CD8-positive, alpha-beta T cell (primary cell): ENCODE measurements at regions of chr16 and their contacts with region 1.

Region 1: DNA sequence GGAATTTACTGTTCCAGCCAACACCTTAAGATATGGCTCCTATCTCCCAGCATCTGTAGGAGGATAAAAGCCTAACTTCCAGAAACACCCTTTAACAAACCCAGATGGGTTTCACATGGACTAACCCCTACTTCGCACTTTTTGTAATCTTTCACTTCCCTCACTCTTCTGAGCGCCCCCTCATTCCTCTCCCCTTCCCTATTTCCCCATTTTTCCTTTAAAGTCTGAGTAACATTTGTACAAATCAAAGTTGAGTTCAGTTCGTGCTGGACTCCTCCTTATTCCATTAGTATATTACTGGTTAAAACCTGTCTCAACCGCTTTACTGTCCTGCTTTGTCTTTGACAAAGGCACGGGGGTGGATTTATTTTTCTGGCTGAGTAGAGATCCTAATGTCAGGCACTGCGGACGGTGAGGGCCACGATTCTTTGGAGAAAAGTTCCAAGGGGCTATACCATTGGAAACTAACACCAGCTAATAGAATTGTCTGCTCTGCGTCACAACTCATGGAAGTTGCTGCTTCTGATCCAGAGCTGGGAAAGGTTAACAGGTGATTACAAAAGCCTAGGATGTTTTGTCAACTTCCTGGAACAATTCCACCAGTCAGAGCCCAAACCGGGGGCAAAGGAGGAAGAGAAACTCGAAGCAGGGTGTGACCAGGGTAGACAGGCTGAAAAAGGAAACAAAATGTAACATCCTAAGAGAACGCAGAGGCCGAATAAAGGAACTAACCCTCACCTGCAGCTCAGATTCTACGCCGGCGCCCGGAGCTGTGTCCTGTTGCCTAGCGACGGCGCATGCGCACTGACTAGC is 12.5 kb downstream of the TAT start:
- DNase-seq: peak in 1 of 9 experiments; percentile 8
- ATAC-seq: no peak
- H3K4me3 ChIP-seq: peak overlapping the region; percentile 64 to 66
- H3K4me3 Mint-ChIP-seq: peak overlapping the region; percentile 91
- H3K27ac ChIP-seq: peak overlapping the region; percentile 72 to 73
- H3K27ac Mint-ChIP-seq: peak overlapping the region; percentile 94
- H3K4me1 ChIP-seq: peaks cover 11% of the 10 kb centered on the region
- H3K4me1 Mint-ChIP-seq: peaks cover 15% of the 10 kb centered on the region
- H3K27me3 ChIP-seq: no peaks in the 10 kb centered on the region
- H3K27me3 Mint-ChIP-seq: no peaks in the 10 kb centered on the region
- CTCF ChIP-seq: no peak

Region 2: DNA sequence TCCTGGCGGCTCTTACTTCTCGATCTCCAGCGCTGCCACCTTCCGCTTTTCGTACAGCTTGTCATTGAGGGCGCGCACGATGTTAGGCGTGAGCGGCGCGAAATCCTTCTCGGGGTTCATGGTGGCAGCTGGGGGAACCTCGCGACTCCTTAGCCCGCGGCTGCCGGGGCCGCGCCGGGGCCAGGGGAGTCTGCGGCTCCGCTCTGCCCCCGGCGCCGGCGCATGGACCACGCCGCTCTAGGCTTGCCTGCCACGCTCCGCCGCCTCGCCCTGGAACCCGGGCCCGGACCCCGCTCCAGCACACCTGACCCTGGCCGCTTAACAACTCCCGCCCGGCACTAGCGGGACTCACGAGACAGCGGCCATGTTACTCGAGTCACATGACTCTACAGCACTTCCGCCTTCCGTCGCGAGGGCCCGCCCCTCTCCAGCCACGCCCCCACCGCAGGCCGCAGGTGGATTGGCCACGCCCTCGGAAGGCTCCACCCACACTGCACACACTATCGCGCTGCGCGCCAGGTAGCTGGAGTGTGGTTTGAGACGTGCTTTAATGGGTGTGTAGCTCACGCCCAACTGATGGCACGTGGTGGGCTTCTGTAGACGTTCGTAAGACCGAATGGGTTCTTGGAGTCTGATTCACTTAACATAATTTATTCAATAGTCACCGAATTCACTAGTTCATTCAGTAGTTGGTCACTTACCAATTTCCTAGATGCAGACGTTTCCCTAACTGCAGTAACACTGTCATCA is 763.4 kb before region 1 on chr16 and contains the start of gene VAC14:
- CTCF ChIA-PET with region 1: no interaction called
- POLR2A ChIA-PET with region 1: no interaction called
- intact Hi-C with region 1: loop called in 1 of 2 experiments (anchors 5 kb)
- DNase-seq: peak; percentile 95 to 99 (median 97)
- ATAC-seq: peak; percentile 99
- H3K4me3 ChIP-seq: peak within 1 kb of the TSS; percentile 63 to 65
- H3K4me3 Mint-ChIP-seq: peak within 1 kb of the TSS; percentile 95
- H3K27ac ChIP-seq: peak within 1 kb of the TSS; percentile 52 to 57
- H3K27ac Mint-ChIP-seq: peak within 1 kb of the TSS; percentile 97
- H3K4me1 ChIP-seq: peaks cover 12% of the 10 kb centered on the region
- H3K4me1 Mint-ChIP-seq: peaks cover 39% of the 10 kb centered on the region
- H3K27me3 ChIP-seq: no peaks in the 10 kb centered on the region
- H3K27me3 Mint-ChIP-seq: no peaks in the 10 kb centered on the region
- CTCF ChIP-seq: no peak
- total RNA-seq, gene VAC14: 27.1 to 27.2 TPM

Region 3: GRCh38 chr16:71484006-71484893 is 80.1 kb before region 1 on chr16:
- CTCF ChIA-PET with region 1: no interaction called
- POLR2A ChIA-PET with region 1: interaction called, 6 read pairs
- intact Hi-C with region 1: loop called (anchors 1 to 5 kb)
- DNase-seq: peak; percentile 56 to 96 (median 80)
- ATAC-seq: peak; percentile 85
- H3K4me3 ChIP-seq: peak overlapping the region; percentile 84 to 94
- H3K4me3 Mint-ChIP-seq: peak overlapping the region; percentile 86
- H3K27ac ChIP-seq: peak overlapping the region; percentile 99
- H3K27ac Mint-ChIP-seq: peak overlapping the region; percentile 94
- H3K4me1 ChIP-seq: peaks cover 13% of the 10 kb centered on the region
- H3K4me1 Mint-ChIP-seq: peaks cover 16% of the 10 kb centered on the region
- H3K27me3 ChIP-seq: no peaks in the 10 kb centered on the region
- H3K27me3 Mint-ChIP-seq: peaks cover 3% of the 10 kb centered on the region
- CTCF ChIP-seq: no peak

Region 4: DNA sequence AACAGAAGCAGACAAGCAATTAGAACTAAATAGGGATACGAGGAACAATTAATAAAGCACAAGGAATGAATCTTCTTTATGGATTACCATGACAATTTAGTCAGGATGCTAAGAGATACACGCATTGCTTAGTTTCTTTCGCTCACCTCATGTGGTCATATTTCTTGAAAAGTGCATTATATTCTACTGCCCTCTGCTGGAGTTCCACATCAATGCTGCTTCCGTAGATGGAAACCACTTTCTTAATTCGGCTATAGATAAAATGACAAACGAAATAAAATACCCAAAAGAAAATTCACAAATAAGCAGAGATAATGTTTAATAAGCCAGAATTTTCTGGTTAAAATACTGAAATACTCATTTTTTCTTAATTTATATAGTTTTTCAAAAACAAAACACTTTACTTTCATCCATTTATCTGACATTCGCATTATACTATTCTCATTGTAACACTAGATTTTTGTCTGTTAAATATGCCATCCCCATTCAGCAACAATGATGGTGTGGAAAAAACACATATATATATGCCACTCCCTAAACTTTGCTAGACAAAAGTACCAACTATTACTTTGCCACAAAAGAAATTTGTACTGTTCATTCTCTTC is 182.2 kb after region 1 on chr16:
- CTCF ChIA-PET with region 1: interaction called, 3 read pairs
- POLR2A ChIA-PET with region 1: no interaction called
- intact Hi-C with region 1: loop called (anchors 1 to 5 kb)
- DNase-seq: peak in 4 of 9 experiments; percentile 9 to 70 (median 40)
- ATAC-seq: peak; percentile 65
- H3K4me3 ChIP-seq: no peak overlapping the region
- H3K4me3 Mint-ChIP-seq: no peak overlapping the region
- H3K27ac ChIP-seq: no peak overlapping the region
- H3K27ac Mint-ChIP-seq: no peak overlapping the region
- H3K4me1 ChIP-seq: no peaks in the 10 kb centered on the region
- H3K4me1 Mint-ChIP-seq: peaks cover 3% of the 10 kb centered on the region
- H3K27me3 ChIP-seq: no peaks in the 10 kb centered on the region
- H3K27me3 Mint-ChIP-seq: no peaks in the 10 kb centered on the region
- CTCF ChIP-seq: peak; percentile 75

Region 5: GRCh38 chr16:71894921-71895678 is 330.7 kb after region 1 on chr16 and contains the start of gene IST1:
- CTCF ChIA-PET with region 1: no interaction called
- POLR2A ChIA-PET with region 1: no interaction called
- intact Hi-C with region 1: loop called in 1 of 2 experiments (anchors 2 kb)
- DNase-seq: peak; percentile 95 to 99 (median 98)
- ATAC-seq: peak; percentile 94
- H3K4me3 ChIP-seq: peak within 1 kb of the TSS; percentile 98 to 99
- H3K4me3 Mint-ChIP-seq: peak within 1 kb of the TSS; percentile 97
- H3K27ac ChIP-seq: peak within 1 kb of the TSS; percentile 97
- H3K27ac Mint-ChIP-seq: peak within 1 kb of the TSS; percentile 97
- H3K4me1 ChIP-seq: peaks cover 34% of the 10 kb centered on the region
- H3K4me1 Mint-ChIP-seq: peaks cover 32% of the 10 kb centered on the region
- H3K27me3 ChIP-seq: no peaks in the 10 kb centered on the region
- H3K27me3 Mint-ChIP-seq: no peaks in the 10 kb centered on the region
- CTCF ChIP-seq: no peak
- total RNA-seq, gene IST1: 460 to 476 TPM

Region 6: DNA sequence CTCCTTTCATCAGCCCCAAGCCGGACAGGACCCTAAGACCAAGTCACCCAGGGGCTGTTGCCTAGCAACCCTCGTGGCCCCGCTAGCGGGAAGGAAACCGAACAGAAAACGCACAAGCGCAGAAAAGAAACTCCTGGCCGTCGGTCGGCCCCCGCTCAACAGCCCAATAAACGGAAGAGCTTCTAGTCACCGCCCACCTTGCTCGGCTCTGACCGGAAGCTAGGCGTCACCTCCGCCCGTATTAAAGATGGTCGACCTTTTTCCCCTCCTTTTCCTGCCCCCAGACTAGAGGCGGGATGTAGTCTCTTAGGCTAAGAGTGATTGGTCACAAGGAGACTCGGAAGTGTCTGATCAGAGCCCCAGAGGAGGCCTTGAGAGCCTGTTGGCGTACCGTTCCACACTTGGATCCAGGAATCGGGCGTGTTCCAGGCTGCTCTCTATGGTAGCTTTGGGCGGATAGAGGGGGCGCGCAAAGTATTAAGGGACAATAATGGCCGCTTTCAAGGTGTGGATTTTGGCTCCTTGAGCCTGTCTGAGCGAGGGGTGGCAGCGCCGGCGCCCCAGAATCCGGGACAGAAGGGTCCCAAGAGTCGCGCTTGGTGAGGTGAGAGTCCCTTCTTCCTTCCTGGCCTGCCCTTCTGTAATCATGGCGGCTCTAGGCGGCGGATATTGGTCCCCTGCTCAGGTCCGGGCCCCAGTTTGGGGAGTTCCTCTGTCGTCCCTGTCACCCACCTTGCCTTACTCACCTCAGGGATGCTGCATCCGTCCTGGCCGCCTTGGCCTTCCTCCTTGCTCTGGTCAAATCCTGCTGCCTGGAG is 529.3 kb after region 1 on chr16 and contains the starts of genes DHX38 and TXNL4B:
- CTCF ChIA-PET with region 1: no interaction called
- POLR2A ChIA-PET with region 1: no interaction called
- intact Hi-C with region 1: loop called in 1 of 2 experiments (anchors 5 kb)
- DNase-seq: peak; percentile 83 to 98 (median 91)
- ATAC-seq: peak; percentile 95
- H3K4me3 ChIP-seq: peak within 1 kb of the TSS; percentile 89 to 97
- H3K4me3 Mint-ChIP-seq: peak within 1 kb of the TSS; percentile 98
- H3K27ac ChIP-seq: peak within 1 kb of the TSS; percentile 87 to 98
- H3K27ac Mint-ChIP-seq: peak within 1 kb of the TSS; percentile 98
- H3K4me1 ChIP-seq: peaks cover 32% of the 10 kb centered on the region
- H3K4me1 Mint-ChIP-seq: peaks cover 46% of the 10 kb centered on the region
- H3K27me3 ChIP-seq: no peaks in the 10 kb centered on the region
- H3K27me3 Mint-ChIP-seq: no peaks in the 10 kb centered on the region
- CTCF ChIP-seq: no peak
- total RNA-seq, gene DHX38: 122 to 126 TPM
- total RNA-seq, gene TXNL4B: 16.7 to 18.3 TPM